CD14-positive monocyte (primary cell): ENCODE measurements at regions of chr4 and their contacts with region 1.

Region 1: DNA sequence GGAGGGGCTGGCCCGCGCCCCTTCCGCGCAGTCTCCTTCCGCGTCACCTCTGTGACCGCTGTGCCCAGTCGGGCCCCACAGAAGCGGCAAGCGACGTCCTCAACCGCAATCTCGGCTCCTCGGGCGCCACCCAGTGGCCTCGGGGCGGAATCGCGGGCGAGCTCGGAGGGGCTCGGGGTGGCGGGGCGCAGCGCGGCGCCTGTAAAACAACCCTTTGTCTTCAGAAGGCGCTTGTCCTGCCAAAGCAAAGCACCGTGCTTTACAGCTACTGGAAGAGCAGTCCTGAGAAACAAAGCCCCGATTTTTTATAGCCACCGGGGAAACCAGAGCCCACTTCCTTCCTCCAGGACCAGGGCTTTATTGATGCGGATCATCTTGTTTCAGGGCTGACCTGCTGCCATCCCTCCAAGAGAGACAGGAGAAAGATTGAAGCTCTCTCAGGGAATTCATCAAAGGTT is 37.3 kb upstream of the CDKN2AIP start:
- DNase-seq: peak; percentile 64 to 72 (median 70)
- H3K4me3 ChIP-seq: peak overlapping the region; percentile 30 to 68 (median 32)
- H3K4me3 Mint-ChIP-seq: peak overlapping the region; percentile 66 to 82
- H3K27ac ChIP-seq: no peak overlapping the region
- H3K27ac Mint-ChIP-seq: peak overlapping the region in 1 of 7 donors; percentile 17
- H3K4me1 ChIP-seq: peaks cover 0 to 8% of the 10 kb centered on the region in 2 donors
- H3K4me1 Mint-ChIP-seq: peaks cover 10% of the 10 kb centered on the region
- H3K27me3 ChIP-seq: no peaks in the 10 kb centered on the region
- H3K27me3 Mint-ChIP-seq: peaks cover 3 to 7% (median 5%) of the 10 kb centered on the region in 3 donors
- CTCF ChIP-seq: peak; percentile 98

Region 2: GRCh38 chr4:183074296-183074990 is 332.7 kb before region 1 on chr4:
- intact Hi-C with region 1: loop called in 1 of 2 experiments (anchors 10 kb)
- DNase-seq: no peak
- H3K4me3 ChIP-seq: no peak overlapping the region
- H3K4me3 Mint-ChIP-seq: no peak overlapping the region
- H3K27ac ChIP-seq: no peak overlapping the region
- H3K27ac Mint-ChIP-seq: no peak overlapping the region
- H3K4me1 ChIP-seq: no peaks in the 10 kb centered on the region
- H3K4me1 Mint-ChIP-seq: peaks cover 2% of the 10 kb centered on the region
- H3K27me3 ChIP-seq: no peaks in the 10 kb centered on the region
- H3K27me3 Mint-ChIP-seq: peaks cover 2 to 10% (median 7%) of the 10 kb centered on the region in 3 donors
- CTCF ChIP-seq: no peak